ENCODE measurements at regions of chr15 and their contacts with region 1.

Region 1: DNA sequence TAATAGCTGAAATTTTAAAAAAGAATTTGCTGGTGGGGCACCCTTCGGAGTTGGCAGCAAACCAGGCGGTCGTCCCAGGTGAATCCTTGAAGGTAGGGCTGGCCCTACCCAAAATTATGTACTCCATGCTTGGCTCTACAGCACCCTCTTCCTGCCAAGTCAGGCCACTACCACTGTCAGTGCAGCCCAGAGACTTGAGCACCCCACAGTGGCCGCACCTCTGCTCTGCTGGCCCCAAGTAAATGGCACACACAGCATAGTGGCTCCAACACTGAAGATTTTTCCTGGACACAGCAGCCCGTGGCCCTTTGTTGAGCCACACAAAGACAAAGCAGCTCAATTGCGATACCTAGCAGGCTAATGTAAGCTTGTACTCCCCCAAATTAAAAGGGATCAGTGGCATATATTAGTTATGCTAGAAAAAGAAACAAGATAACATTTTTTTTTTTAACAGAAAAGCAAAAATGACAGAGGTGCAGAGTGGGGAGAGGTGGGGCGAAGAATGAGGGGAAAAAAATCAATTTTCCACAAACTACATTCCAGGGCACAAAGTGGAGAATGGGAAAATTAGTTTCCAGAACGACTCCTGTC is 250.5 kb downstream of the UACA start:
- DNase-seq: peak; percentile 76 to 85 (median 82)
- H3K4me3 ChIP-seq: no peak overlapping the region
- H3K4me3 Mint-ChIP-seq: no peak overlapping the region
- H3K27ac ChIP-seq: no peak overlapping the region
- H3K27ac Mint-ChIP-seq: peak overlapping the region in 1 of 7 donors; percentile 78
- H3K4me1 ChIP-seq: peaks cover 23 to 28% of the 10 kb centered on the region in 2 donors
- H3K4me1 Mint-ChIP-seq: peaks cover 49% of the 10 kb centered on the region
- H3K27me3 ChIP-seq: no peaks in the 10 kb centered on the region
- H3K27me3 Mint-ChIP-seq: peaks cover 2 to 24% (median 10%) of the 10 kb centered on the region in 3 donors
- CTCF ChIP-seq: peak; percentile 100

Region 2: DNA sequence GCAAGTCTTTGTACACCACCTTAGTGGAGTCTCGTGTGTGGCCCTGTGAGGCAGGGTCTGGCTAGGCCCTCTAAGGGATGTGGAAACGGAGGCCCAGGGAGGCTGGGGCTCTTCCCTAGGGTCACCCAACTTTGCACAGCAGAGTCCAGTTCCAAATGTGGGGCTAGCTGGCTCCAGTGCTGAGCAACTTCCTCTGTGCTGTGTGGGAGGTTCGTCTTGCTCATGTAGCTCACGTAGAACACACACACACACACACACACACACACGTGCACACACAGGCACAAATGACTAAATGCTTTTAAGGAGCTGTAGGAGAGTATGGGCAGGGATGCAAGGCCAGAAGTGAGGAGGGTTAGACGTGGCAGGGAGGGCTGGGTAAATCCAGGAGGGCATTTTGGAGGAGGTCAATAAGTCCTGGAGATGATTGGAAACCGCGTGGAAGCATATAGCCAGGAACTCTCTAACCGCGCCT is 846.4 kb before region 1 on chr15:
- intact Hi-C with region 1: loop called in 1 of 2 experiments (anchors 10 kb)
- DNase-seq: peak; percentile 86 to 91 (median 89)
- H3K4me3 ChIP-seq: peak overlapping the region in 1 of 3 experiments; percentile 56
- H3K4me3 Mint-ChIP-seq: peak overlapping the region; percentile 59 to 86
- H3K27ac ChIP-seq: peak overlapping the region; percentile 97 to 99
- H3K27ac Mint-ChIP-seq: peak overlapping the region; percentile 97 to 100 (median 99)
- H3K4me1 ChIP-seq: peaks cover 65 to 71% of the 10 kb centered on the region in 2 donors
- H3K4me1 Mint-ChIP-seq: peaks cover 65% of the 10 kb centered on the region
- H3K27me3 ChIP-seq: no peaks in the 10 kb centered on the region
- H3K27me3 Mint-ChIP-seq: peaks cover 2 to 4% (median 4%) of the 10 kb centered on the region in 3 donors
- CTCF ChIP-seq: no peak

Region 3: GRCh38 chr15:70264014-70264582 is 248.8 kb before region 1 on chr15:
- intact Hi-C with region 1: loop called in 1 of 2 experiments (anchors 2 kb)
- DNase-seq: peak; percentile 86 to 94 (median 92)
- H3K4me3 ChIP-seq: peak overlapping the region in 1 of 3 experiments; percentile 44
- H3K4me3 Mint-ChIP-seq: peak overlapping the region; percentile 31 to 77
- H3K27ac ChIP-seq: peak overlapping the region; percentile 79 to 85
- H3K27ac Mint-ChIP-seq: peak overlapping the region; percentile 86 to 100 (median 100)
- H3K4me1 ChIP-seq: peaks cover 86 to 95% of the 10 kb centered on the region in 2 donors
- H3K4me1 Mint-ChIP-seq: peaks cover 89% of the 10 kb centered on the region
- H3K27me3 ChIP-seq: peaks cover 0 to under 1% of the 10 kb centered on the region in 2 donors
- H3K27me3 Mint-ChIP-seq: peaks cover 9 to 17% (median 9%) of the 10 kb centered on the region in 3 donors
- CTCF ChIP-seq: no peak

Region 4: GRCh38 chr15:70281811-70282307 is 231.0 kb before region 1 on chr15:
- intact Hi-C with region 1: no loop called
- DNase-seq: peak in 2 of 3 donors; percentile 41 to 49
- H3K4me3 ChIP-seq: no peak overlapping the region
- H3K4me3 Mint-ChIP-seq: no peak overlapping the region
- H3K27ac ChIP-seq: no peak overlapping the region
- H3K27ac Mint-ChIP-seq: peak overlapping the region in 2 of 7 donors; percentile 21 to 83
- H3K4me1 ChIP-seq: peaks cover 0 to 8% of the 10 kb centered on the region in 2 donors
- H3K4me1 Mint-ChIP-seq: peaks cover 11% of the 10 kb centered on the region
- H3K27me3 ChIP-seq: no peaks in the 10 kb centered on the region
- H3K27me3 Mint-ChIP-seq: peaks cover 3 to 11% (median 4%) of the 10 kb centered on the region in 3 donors
- CTCF ChIP-seq: no peak

Region 5: GRCh38 chr15:70466895-70467529 is 45.9 kb before region 1 on chr15:
- intact Hi-C with region 1: loop called (anchors 1 to 5 kb)
- DNase-seq: peak; percentile 57 to 69 (median 60)
- H3K4me3 ChIP-seq: no peak overlapping the region
- H3K4me3 Mint-ChIP-seq: no peak overlapping the region
- H3K27ac ChIP-seq: no peak overlapping the region
- H3K27ac Mint-ChIP-seq: peak overlapping the region in 4 of 7 donors; percentile 23 to 83 (median 64)
- H3K4me1 ChIP-seq: peaks cover 27 to 43% of the 10 kb centered on the region in 2 donors
- H3K4me1 Mint-ChIP-seq: peaks cover 45% of the 10 kb centered on the region
- H3K27me3 ChIP-seq: no peaks in the 10 kb centered on the region
- H3K27me3 Mint-ChIP-seq: peaks cover 6 to 23% (median 7%) of the 10 kb centered on the region in 3 donors
- CTCF ChIP-seq: peak; percentile 58

Region 6: DNA sequence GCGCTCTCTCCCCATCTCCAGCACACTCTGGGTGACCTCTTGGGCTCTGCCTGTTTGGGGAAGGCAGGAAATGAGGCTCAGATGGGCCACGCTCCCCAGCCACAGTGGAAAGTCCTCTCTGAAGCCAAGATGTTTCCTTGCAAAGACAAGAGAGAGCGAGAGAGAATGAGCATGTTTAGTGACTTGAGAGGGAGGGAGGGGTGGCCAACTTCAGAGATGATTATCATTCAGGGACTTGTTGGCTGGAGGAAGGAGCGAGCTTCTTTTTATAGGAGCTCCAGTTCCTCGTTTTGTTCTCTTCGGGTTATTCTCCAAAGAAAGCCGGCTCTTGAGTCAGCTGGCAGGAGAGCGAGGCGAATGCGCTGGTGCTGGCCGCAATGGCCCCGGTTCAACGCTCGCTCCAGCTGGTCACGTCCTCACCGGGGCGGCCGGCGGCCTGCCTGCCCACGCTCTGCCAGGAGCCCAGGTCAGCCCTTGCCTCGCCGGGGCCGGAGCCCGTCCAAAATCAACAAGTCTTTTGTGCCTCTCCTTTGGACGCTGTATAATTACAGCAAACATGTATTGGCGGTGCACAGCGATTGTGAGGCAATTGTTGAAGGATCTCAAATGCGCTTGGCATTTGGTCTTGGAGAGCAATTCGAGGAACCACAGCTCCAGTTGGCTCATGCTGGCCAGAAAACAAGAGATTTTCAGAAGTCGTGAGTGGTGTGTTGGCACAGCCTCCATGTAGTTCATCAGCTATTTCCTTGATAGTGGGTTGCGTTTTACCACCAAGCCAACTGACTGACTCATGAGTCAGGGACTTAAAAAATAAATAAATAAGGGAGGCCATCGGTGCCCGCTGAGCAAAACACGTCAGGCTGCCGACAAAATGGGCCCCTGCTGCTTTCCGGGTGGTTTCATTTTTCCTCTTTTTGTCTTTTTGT is 38.1 kb before region 1 on chr15:
- intact Hi-C with region 1: loop called in 1 of 2 experiments (anchors 5 kb)
- DNase-seq: peak; percentile 88 to 94 (median 91)
- H3K4me3 ChIP-seq: peak overlapping the region in 2 of 3 experiments; percentile 16 to 65
- H3K4me3 Mint-ChIP-seq: peak overlapping the region; percentile 70 to 79
- H3K27ac ChIP-seq: peak overlapping the region; percentile 79 to 94
- H3K27ac Mint-ChIP-seq: peak overlapping the region; percentile 94 to 99 (median 95)
- H3K4me1 ChIP-seq: peaks cover 58 to 60% of the 10 kb centered on the region in 2 donors
- H3K4me1 Mint-ChIP-seq: peaks cover 63% of the 10 kb centered on the region
- H3K27me3 ChIP-seq: no peaks in the 10 kb centered on the region
- H3K27me3 Mint-ChIP-seq: peaks cover 4 to 16% (median 8%) of the 10 kb centered on the region in 3 donors
- CTCF ChIP-seq: no peak

Region 7: DNA sequence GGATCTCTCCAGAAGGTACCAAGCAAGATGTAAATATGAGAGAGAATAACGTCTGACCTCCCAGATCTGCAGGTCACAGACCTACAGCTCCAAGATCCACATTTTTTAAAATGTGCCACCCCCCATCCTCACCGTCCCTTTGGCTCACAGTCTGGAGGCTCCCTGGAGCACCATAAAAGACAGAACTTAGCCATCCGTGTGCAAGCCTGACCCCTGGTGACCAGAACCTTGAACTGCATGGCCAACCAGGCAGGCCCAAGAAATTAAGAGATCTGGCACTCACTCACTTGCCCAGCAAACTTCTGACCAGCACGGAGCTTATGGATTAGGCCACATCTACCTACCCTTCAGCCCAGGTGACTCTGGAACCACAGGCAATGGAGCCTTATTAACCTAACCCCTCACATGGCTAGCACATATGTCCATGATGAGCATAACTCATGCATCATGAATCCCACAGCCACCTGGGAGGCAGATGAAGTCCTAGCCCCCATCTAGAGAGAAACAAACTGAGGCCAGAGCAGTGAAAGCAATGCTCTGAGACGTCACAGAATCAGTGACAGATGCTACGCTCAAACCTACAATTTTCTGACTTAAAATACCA is 24.8 kb before region 1 on chr15:
- intact Hi-C with region 1: loop called (anchors 2 kb)
- DNase-seq: peak; percentile 80 to 84 (median 82)
- H3K4me3 ChIP-seq: no peak overlapping the region
- H3K4me3 Mint-ChIP-seq: peak overlapping the region in 1 of 2 donors; percentile 53
- H3K27ac ChIP-seq: peak overlapping the region; percentile 93 to 96
- H3K27ac Mint-ChIP-seq: peak overlapping the region; percentile 97 to 100 (median 99)
- H3K4me1 ChIP-seq: peaks cover 87 to 96% of the 10 kb centered on the region in 2 donors
- H3K4me1 Mint-ChIP-seq: peaks cover 92% of the 10 kb centered on the region
- H3K27me3 ChIP-seq: no peaks in the 10 kb centered on the region
- H3K27me3 Mint-ChIP-seq: peaks cover 9 to 21% (median 11%) of the 10 kb centered on the region in 3 donors
- CTCF ChIP-seq: peak; percentile 94

Measured in CD14-positive monocyte (primary cell).